ENCODE measurements at regions of chr9 and their contacts with region 1.

Region 1: DNA sequence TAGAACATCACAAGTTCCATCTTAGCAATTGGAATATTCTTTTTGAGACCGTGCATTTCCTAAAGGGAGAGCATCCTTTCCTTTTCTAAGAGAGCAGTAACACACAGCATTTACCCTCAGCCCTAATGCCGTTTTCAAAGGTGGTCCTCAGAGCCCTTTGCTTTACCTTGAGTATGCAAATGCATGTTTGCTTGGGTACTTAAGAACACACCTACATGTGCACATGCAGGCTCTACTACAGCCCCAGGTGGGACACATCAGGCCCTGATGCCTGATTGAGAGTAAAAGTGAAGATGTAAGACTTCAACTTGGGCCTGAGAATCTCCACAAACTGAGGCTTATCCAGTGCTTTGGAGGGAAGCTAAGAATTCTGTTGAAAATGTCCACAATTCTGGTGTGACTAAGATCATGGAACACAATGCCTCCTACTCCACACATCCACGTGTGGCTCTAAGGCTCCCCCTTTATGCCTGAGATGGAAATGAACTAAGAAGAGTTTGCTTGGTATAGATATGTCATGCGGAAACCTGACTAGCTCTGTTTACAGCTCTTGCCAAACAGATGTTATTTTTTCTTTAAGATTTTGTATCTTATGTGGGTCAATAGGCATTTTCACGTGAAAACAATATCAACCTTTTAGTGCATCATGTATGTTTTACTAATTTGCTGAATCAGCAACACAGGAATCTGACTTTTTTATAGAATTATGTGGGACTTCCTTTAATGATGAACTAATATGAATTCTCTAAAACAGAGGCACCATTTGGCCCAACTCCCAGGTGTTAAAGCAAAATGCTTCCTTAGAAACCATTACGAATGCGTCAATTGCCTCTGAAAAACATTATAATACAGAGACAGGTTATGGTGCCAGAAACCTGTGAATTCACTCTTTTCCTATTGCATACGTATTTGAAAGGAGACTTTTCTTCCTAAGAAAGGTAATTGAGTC is 48.9 kb upstream of the SLC2A8 start:
- DNase-seq: peak; percentile 75
- H3K4me3 ChIP-seq: no peak overlapping the region
- H3K27ac ChIP-seq: no peak overlapping the region
- H3K4me1 ChIP-seq: no peaks in the 10 kb centered on the region
- H3K27me3 ChIP-seq: no peaks in the 10 kb centered on the region
- CTCF ChIP-seq: peak; percentile 33 to 57
- POLR2A ChIP-seq: no peak

Region 2: DNA sequence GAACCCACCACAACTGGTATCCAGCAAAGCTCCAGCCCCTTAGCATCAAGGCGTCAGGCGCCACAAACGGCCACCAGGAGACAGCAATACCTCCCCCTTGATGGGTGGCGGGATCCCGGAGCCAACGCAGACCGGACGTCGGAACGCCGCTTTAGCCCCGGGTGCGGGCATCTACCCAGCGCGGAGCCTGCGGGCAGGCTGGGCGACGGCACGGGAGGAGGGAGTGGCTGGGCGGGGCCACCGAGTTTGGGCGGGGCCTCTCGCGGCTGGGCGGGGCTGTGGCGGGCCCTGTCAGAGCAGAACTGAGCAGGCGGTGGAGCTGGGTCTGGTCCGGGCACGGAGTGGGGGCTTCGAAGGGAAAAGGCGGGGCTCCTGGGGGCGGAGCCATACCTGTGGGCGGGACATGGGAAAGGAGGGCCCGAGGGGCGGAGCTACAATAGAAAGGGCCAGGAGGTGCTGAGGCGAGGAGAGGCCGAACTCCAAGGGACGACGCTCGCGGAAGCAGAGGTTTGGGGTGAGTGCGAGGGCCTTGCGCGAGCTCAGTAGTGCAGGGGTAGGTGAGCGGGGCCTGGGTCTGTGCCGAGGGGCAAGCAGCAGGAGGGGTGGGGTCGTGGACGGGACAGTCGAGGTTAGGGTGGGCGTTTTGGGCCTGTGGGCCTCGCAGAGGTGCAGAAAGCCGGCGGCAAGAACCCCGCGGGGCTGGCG is 123.8 kb before region 1 on chr9:
- CTCF ChIA-PET with region 1: interaction called, 29 read pairs
- POLR2A ChIA-PET with region 1: interaction called, 3 read pairs
- dilution Hi-C with region 1: no loop called
- intact Hi-C with region 1: no loop called
- DNase-seq: peak; percentile 86
- H3K4me3 ChIP-seq: peak overlapping the region in 2 of 3 experiments; percentile 31 to 44
- H3K27ac ChIP-seq: no peak overlapping the region
- H3K4me1 ChIP-seq: peaks cover 6% of the 10 kb centered on the region
- H3K27me3 ChIP-seq: peaks cover 14 to 27% of the 10 kb centered on the region in 2 experiments
- CTCF ChIP-seq: no peak
- POLR2A ChIP-seq: no peak

Region 3: GRCh38 chr9:127283917-127284316 is 64.2 kb before region 1 on chr9:
- CTCF ChIA-PET with region 1: interaction called, 14 read pairs
- POLR2A ChIA-PET with region 1: no interaction called
- dilution Hi-C with region 1: no loop called
- intact Hi-C with region 1: loop called (anchors 1 kb)
- DNase-seq: peak; percentile 20
- H3K4me3 ChIP-seq: no peak overlapping the region
- H3K27ac ChIP-seq: no peak overlapping the region
- H3K4me1 ChIP-seq: no peaks in the 10 kb centered on the region
- H3K27me3 ChIP-seq: no peaks in the 10 kb centered on the region
- CTCF ChIP-seq: peak in 1 of 2 donors; percentile 15
- POLR2A ChIP-seq: no peak

Region 4: GRCh38 chr9:127318651-127319167 is 29.4 kb before region 1 on chr9:
- CTCF ChIA-PET with region 1: interaction called, 20 read pairs
- POLR2A ChIA-PET with region 1: no interaction called
- dilution Hi-C with region 1: no loop called
- intact Hi-C with region 1: no loop called
- DNase-seq: no peak
- H3K4me3 ChIP-seq: no peak overlapping the region
- H3K27ac ChIP-seq: no peak overlapping the region
- H3K4me1 ChIP-seq: peaks cover 3% of the 10 kb centered on the region
- H3K27me3 ChIP-seq: no peaks in the 10 kb centered on the region
- CTCF ChIP-seq: no peak
- POLR2A ChIP-seq: no peak

Region 5: DNA sequence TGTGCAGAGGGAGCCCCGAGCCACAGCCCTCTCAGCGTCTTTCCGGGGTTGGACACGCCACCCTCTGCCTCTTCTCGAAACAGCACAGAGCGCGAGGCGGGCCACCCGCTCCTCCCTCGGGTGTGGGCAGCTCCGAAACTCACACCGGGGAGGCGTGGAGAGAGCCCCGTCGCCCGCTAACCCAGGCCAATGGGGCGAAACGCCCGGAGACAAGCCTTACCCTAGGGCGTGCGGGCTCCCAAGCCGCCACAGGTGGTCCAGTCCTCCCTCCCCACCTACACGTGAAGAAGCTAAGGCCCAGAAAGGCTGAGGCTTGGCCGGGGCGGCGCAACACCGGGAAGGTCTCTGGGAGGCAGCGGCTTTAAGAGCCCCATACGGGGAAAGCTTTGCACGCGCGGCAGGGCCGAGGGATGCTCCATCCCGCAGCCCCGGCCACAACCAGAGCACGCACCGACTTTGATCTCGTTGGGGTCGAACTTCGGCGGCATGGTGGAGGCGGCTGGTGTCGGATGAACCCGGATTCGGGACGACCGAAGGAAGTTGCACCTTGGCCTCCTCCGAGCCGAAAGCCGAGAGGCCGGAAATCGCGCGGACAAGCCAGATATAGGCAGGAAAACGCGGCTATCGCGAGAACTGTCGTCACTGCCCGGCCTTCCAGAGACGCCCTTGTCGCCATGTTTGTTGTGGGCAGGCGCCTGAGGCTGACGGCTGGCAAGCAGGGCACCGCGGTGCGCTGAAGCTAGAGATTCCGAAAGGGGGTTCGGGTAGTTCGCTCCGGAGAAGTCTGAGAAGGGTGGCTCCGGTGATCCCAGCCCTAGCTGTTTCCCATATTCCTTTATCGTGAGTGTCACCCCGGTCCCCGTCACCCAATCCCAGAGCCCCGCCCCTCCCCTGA is 103.0 kb after region 1 on chr9 and contains the starts of genes LRSAM1 and RPL12:
- CTCF ChIA-PET with region 1: no interaction called
- POLR2A ChIA-PET with region 1: no interaction called
- dilution Hi-C with region 1: no loop called
- intact Hi-C with region 1: no loop called
- DNase-seq: peak; percentile 93
- H3K4me3 ChIP-seq: peak within 1 kb of the TSS; percentile 54 to 85 (median 60)
- H3K27ac ChIP-seq: peak within 1 kb of the TSS; percentile 65
- H3K4me1 ChIP-seq: peaks cover 19% of the 10 kb centered on the region
- H3K27me3 ChIP-seq: no peaks in the 10 kb centered on the region
- CTCF ChIP-seq: no peak
- POLR2A ChIP-seq: peak; percentile 99
- total RNA-seq, gene LRSAM1: 18.5 and 18.9 TPM in 2 replicates
- total RNA-seq, gene RPL12: 1,231 and 1,361 TPM in 2 replicates